Mammary epithelial cell (primary cell): ENCODE measurements at regions of chrX and their contacts with region 1.

Region 1: GRCh38 chrX:74291964-74292807 is 11.8 kb upstream of the ZCCHC13 start:
- DNase-seq: peak; percentile 80
- H3K4me3 ChIP-seq: peak overlapping the region; percentile 53 to 76 (median 59)
- H3K27ac ChIP-seq: peak overlapping the region; percentile 89
- H3K4me1 ChIP-seq: no peaks in the 10 kb centered on the region
- H3K27me3 ChIP-seq: no peaks in the 10 kb centered on the region
- CTCF ChIP-seq: peak in 1 of 2 donors; percentile 35

Region 2: DNA sequence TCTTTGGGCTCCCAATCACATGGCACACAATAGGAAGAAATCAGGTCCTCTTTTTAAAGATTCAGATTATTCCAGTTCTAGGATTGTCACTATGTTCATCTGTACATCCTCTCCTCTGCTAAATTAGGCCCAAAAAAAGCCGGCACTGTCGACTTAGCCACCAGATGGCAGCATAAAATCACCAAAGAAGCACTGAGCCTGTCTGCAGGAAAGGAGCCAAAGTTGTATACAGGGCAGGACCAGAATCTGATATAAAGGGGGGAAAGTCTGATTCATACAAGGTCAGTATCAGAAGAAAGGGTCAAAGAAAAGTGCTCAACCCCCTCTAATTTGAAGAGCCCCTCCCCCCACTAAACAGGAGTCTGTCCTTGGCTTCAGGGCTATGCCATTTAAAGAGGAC is 436.6 kb before region 1 on chrX:
- CTCF ChIA-PET with region 1: no interaction called
- dilution Hi-C with region 1: no loop called
- in situ Hi-C with region 1: no loop called
- intact Hi-C with region 1: loop called (anchors 1 kb)
- DNase-seq: peak; percentile 60
- H3K4me3 ChIP-seq: no peak overlapping the region
- H3K27ac ChIP-seq: no peak overlapping the region
- H3K4me1 ChIP-seq: no peaks in the 10 kb centered on the region
- H3K27me3 ChIP-seq: no peaks in the 10 kb centered on the region
- CTCF ChIP-seq: peak; percentile 85 to 88

Region 3: DNA sequence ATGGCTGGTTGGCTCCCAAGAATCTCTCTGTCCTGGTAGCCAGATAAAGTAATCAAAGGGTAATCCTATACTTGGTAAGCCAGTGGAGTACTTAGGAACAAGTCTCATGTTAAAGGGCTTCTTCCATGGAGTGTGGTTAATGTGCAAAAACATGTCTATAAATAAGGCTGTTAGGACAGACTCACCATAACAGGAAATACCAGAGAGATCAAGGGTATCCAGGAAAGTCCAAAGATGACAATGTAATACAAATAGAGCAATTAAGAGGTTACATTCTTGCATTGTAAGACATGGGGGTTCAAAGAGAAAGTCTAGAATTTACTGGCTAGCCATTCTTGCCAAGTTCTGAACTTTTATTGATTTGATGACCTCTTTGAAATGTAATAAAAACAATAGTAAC is 50.1 kb before region 1 on chrX:
- CTCF ChIA-PET with region 1: no interaction called
- dilution Hi-C with region 1: no loop called
- in situ Hi-C with region 1: no loop called
- intact Hi-C with region 1: loop called (anchors 2 kb)
- DNase-seq: peak; percentile 45
- H3K4me3 ChIP-seq: no peak overlapping the region
- H3K27ac ChIP-seq: peak overlapping the region; percentile 69
- H3K4me1 ChIP-seq: peaks cover 10% of the 10 kb centered on the region
- H3K27me3 ChIP-seq: no peaks in the 10 kb centered on the region
- CTCF ChIP-seq: no peak

Region 4: DNA sequence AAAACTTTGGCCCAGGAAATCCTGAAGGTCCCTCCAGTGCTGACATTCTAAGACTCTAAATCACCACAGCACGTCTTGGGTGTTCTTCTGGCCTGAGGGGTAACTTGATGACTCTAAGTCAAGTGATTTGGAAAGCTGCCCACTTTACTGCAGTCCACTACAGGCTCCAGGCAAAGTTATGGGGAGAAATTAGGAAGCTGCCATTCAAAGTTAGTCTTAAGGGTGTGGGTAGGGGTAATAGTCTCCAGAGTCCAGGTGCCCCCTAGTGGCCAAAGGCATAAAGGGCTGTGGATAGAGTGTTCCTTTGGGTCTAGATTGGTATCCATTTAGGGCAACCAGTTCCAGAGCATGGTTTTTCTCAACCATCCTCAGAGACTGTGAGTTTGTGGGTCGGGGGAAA is 90.4 kb after region 1 on chrX:
- CTCF ChIA-PET with region 1: interaction called, 21 read pairs
- dilution Hi-C with region 1: no loop called
- in situ Hi-C with region 1: no loop called
- intact Hi-C with region 1: loop called (anchors 2 kb)
- DNase-seq: peak; percentile 62
- H3K4me3 ChIP-seq: no peak overlapping the region
- H3K27ac ChIP-seq: no peak overlapping the region
- H3K4me1 ChIP-seq: no peaks in the 10 kb centered on the region
- H3K27me3 ChIP-seq: peaks cover 2% of the 10 kb centered on the region
- CTCF ChIP-seq: peak; percentile 85 to 97

Region 5: DNA sequence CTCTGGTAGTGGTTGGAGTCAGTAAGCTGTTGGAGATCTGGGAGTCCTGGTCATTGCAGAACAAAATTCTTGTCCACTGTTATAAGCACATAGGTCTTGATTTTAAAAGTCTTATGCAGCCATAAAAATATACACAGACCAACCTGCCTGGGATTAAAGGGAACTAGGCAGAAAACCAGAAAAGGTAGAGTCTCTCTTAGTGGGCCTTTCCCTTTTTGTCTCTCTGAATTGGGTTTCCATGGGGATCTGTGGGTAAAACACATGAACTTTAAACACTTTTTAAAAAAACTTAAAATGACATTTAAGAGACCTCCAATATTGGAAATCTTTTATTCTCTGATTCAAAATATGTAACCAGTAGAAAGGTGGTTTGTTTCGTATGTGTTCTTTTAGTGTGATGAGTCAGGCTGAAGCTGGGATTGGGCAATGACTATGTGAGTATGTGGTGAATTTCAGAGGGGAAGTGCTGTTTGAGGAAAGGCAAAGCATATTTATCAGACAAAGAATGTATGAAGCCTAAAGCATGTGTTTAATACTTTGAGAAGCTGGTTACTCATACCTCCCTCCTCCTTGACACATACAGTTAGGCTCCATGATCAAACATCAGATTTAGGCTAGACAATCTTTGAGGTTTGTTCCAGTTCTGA is 158.7 kb after region 1 on chrX:
- CTCF ChIA-PET with region 1: no interaction called
- dilution Hi-C with region 1: no loop called
- in situ Hi-C with region 1: no loop called
- intact Hi-C with region 1: loop called (anchors 5 kb)
- DNase-seq: peak; percentile 90
- H3K4me3 ChIP-seq: no peak overlapping the region
- H3K27ac ChIP-seq: peak overlapping the region; percentile 84
- H3K4me1 ChIP-seq: peaks cover 51% of the 10 kb centered on the region
- H3K27me3 ChIP-seq: no peaks in the 10 kb centered on the region
- CTCF ChIP-seq: no peak

Region 6: DNA sequence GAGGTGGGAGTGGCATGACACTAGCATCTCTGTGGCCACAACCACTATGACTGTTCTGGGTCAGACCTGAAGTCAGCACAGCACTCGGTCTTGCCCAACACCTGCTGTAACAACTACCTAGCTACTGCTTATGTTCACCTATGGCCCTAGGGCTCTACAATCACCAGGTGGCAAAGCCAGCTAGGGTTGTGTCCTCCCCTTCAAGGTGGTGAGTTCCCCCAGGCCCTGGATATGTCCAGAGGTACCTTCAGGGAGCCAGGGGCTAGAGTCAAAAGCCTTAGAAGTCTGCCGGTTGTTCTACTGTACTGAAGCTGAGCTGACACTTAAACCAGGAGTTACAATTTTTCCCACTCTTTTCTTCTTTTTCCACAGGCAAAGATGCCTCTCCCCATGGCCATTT is 411.9 kb after region 1 on chrX:
- CTCF ChIA-PET with region 1: no interaction called
- dilution Hi-C with region 1: no loop called
- in situ Hi-C with region 1: no loop called
- intact Hi-C with region 1: no loop called
- DNase-seq: no peak
- H3K4me3 ChIP-seq: no peak overlapping the region
- H3K27ac ChIP-seq: no peak overlapping the region
- H3K4me1 ChIP-seq: no peaks in the 10 kb centered on the region
- H3K27me3 ChIP-seq: peaks cover 2% of the 10 kb centered on the region
- CTCF ChIP-seq: no peak